Head of caudate nucleus (tissue), 42 donors: ENCODE measurements at regions of chr5 and their contacts with region 1.

Region 1: GRCh38 chr5:113507601-113508000 is 5.9 kb upstream of the YTHDC2 start:
- DNase-seq: no peak

Region 2: DNA sequence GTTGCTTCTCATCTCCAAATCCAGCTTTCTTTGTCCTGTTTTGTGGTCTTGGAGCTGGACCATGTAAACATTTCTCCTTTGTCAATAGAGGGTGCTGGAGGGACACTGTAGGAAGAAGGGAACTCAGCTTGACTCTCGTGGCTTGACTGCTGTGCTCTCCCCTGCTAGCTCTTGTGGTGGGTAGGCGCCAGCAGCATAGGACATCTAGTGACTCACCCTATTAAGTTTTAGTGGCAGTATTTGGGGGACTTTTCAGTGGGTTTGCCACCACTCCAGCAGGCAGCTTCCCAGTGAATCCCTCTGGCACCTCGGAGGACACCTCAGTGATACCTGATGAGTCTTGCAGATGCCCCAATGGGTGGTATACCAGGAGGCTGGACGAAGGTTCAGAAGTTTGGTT is 170.6 kb before region 1 on chr5:
- intact Hi-C with region 1: no loop called
- DNase-seq: peak in 4 of 42 donors; percentile 9 to 47 (median 30)

Region 3: DNA sequence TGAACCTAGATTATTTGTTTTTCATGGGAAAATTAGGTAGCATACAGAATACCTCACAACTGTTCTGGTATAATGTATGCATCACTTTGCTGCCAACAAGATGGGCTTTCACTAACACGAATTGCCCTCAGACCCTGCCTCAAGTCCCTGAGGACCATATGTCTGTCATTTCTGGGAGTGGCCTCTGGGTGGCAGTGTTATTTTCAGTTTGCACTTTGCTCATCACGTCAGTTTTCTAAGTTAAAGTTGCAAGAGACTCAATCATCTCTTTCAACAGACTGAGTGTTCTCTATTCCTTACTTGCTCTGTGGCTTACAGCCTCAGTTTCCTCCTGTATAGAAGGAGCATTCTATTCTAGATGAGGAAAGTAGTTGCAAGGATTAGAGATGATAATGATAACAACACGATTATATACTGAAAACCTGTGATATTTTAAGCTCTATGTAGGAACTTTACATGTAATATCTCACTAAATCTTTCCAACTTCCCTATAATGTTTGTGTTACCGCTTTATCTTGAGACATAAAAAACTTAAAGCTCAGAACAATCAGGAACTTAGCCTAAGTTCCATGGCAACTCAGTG is 128.6 kb before region 1 on chr5:
- intact Hi-C with region 1: loop called (anchors 10 kb)
- DNase-seq: peak in 41 of 42 donors; percentile 16 to 87 (median 64)